ENCODE measurements at regions of chr13 and their contacts with region 1.

Region 1: GRCh38 chr13:31909864-31910551 is 121.6 kb upstream of the FRY start:
- DNase-seq: peak; percentile 42
- H3K4me3 ChIP-seq: no peak overlapping the region
- H3K27ac ChIP-seq: no peak overlapping the region
- H3K27me3 ChIP-seq: peaks cover 8% of the 10 kb centered on the region
- CTCF ChIP-seq: peak; percentile 85

Region 2: GRCh38 chr13:31919971-31920726 is 10.1 kb after region 1 on chr13:
- CTCF ChIA-PET with region 1: interaction called, 70 read pairs
- POLR2A ChIA-PET with region 1: no interaction called
- DNase-seq: no peak
- H3K4me3 ChIP-seq: no peak overlapping the region
- H3K27ac ChIP-seq: no peak overlapping the region
- H3K27me3 ChIP-seq: no peaks in the 10 kb centered on the region
- CTCF ChIP-seq: no peak

Region 3: GRCh38 chr13:31956980-31957644 is 47.1 kb after region 1 on chr13:
- CTCF ChIA-PET with region 1: interaction called, 14 read pairs
- POLR2A ChIA-PET with region 1: interaction called, 3 read pairs
- DNase-seq: no peak
- H3K4me3 ChIP-seq: no peak overlapping the region
- H3K27ac ChIP-seq: no peak overlapping the region
- H3K27me3 ChIP-seq: no peaks in the 10 kb centered on the region
- CTCF ChIP-seq: no peak

Region 4: GRCh38 chr13:32019612-32020233 is 109.7 kb after region 1 on chr13:
- CTCF ChIA-PET with region 1: interaction called, 16 read pairs
- POLR2A ChIA-PET with region 1: no interaction called
- DNase-seq: peak; percentile 63
- H3K4me3 ChIP-seq: no peak overlapping the region
- H3K27ac ChIP-seq: no peak overlapping the region
- H3K27me3 ChIP-seq: no peaks in the 10 kb centered on the region
- CTCF ChIP-seq: peak; percentile 94

Region 5: GRCh38 chr13:32107474-32107873 is 197.5 kb after region 1 on chr13:
- CTCF ChIA-PET with region 1: no interaction called
- POLR2A ChIA-PET with region 1: no interaction called
- DNase-seq: no peak
- H3K4me3 ChIP-seq: no peak overlapping the region
- H3K27ac ChIP-seq: no peak overlapping the region
- H3K27me3 ChIP-seq: no peaks in the 10 kb centered on the region
- CTCF ChIP-seq: no peak

Region 6: DNA sequence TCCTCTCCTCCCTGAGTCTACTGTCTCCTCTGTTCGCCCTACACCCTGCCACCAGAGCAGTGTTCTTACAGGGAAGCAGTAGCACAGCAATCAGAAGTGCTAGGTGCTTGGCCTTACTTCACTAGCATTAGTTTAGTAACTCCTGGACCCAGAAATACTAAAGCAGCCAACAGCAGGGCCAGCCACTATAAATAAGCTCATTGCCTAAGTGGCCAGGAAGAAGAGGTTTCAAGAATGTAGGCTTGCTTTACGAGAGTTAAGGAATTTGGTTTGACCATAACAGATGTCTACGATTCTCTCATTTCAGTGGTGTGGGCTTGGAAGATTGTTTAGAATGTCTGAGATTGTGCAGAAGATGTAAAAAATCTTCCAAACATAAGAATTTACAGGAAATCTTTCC is 301.8 kb after region 1 on chr13:
- CTCF ChIA-PET with region 1: interaction called, 16 read pairs
- POLR2A ChIA-PET with region 1: no interaction called
- DNase-seq: peak; percentile 92
- H3K4me3 ChIP-seq: no peak overlapping the region
- H3K27ac ChIP-seq: peak overlapping the region; percentile 89
- H3K27me3 ChIP-seq: no peaks in the 10 kb centered on the region
- CTCF ChIP-seq: no peak

Region 7: DNA sequence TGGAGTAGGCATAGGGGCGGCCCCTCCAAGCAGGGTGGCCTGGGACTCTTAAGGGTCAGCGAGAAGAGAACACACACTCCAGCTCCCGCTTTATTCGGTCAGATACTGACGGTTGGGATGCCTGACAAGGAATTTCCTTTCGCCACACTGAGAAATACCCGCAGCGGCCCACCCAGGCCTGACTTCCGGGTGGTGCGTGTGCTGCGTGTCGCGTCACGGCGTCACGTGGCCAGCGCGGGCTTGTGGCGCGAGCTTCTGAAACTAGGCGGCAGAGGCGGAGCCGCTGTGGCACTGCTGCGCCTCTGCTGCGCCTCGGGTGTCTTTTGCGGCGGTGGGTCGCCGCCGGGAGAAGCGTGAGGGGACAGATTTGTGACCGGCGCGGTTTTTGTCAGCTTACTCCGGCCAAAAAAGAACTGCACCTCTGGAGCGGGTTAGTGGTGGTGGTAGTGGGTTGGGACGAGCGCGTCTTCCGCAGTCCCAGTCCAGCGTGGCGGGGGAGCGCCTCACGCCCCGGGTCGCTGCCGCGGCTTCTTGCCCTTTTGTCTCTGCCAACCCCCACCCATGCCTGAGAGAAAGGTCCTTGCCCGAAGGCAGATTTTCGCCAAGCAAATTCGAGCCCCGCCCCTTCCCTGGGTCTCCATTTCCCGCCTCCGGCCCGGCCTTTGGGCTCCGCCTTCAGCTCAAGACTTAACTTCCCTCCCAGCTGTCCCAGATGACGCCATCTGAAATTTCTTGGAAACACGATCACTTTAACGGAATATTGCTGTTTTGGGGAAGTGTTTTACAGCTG is 405.4 kb after region 1 on chr13 and contains the starts of genes BRCA2 and ZAR1L:
- CTCF ChIA-PET with region 1: interaction called, 18 read pairs
- POLR2A ChIA-PET with region 1: no interaction called
- DNase-seq: peak; percentile 71
- H3K4me3 ChIP-seq: peak within 1 kb of the TSS; percentile 82
- H3K27ac ChIP-seq: peak within 1 kb of the TSS; percentile 96
- H3K27me3 ChIP-seq: no peaks in the 10 kb centered on the region
- CTCF ChIP-seq: no peak
- polyA plus RNA-seq, gene BRCA2: 0.63 and 0.92 TPM in 2 replicates
- polyA plus RNA-seq, gene ZAR1L: not detected in 2 replicates

Measured in AG04450 (cell line).